H1 (cell line): ENCODE measurements at regions of chr7 and their contacts with region 1.

Region 1: GRCh38 chr7:129054438-129055293 is at the start of gene TNPO3:
- DNase-seq: peak; percentile 83 to 95
- H3K4me3 ChIP-seq: peak within 1 kb of the TSS; percentile 83 to 99 (median 92)
- H3K27ac ChIP-seq: peak within 1 kb of the TSS; percentile 96
- H3K4me1 ChIP-seq: no peaks in the 10 kb centered on the region; a peak in 1 of 7 replicates
- H3K27me3 ChIP-seq: no peaks in the 10 kb centered on the region
- CTCF ChIP-seq: 0 out of 4 replicates have a peak, but pooled peaks of 1 of the 3 experiments have one; percentile 12
- EP300 ChIP-seq: no peak
- POLR2A ChIP-seq: peak; percentile 75 to 99
- RAD21 ChIP-seq: no peak
- total RNA-seq, gene TNPO3: 99.2 and 100 TPM in 2 replicates

Region 2: DNA sequence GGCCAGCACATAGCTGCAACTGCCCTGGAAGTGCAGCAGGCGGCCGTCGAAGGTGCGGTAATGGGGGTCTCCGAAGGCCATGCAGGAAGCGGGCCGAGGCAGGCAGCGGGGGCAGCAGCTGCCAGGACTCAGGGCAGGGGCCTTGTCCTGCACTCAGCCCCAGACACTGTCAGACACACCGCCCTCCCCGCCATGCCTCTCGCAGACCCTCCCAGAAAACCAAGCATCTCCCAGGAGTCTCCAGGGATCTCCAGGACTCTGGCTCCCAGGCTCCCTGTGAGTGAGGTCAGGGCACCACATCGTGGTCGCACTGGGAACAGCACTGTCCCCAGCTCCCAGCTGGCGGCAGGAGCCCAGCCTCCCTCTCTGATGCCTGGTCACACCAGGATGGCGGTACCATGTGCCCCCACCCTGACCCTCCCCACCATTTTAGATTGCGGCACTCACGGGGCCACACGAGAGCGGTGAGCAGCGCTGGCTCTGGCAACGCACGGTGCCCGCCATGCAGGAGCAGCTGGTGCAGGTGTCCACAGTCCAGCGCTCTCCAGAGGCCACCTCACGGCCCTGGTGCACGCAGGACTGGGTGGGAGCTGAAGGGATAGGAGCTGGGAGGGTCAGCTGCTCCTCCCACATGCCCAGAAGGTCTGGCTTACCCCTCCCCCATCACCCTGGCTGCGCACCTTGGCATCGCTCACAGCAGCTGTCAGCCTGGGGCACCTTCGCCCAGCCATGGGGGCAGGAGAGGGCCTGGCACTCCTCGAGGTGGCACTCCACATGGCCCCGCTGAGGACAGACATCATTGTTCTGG is 174.5 kb before region 1 on chr7:
- CTCF ChIA-PET with region 1: no interaction called
- POLR2A ChIA-PET with region 1: no interaction called
- DNase-seq: peak in 1 of 2 experiments; percentile 89
- H3K4me3 ChIP-seq: no peak overlapping the region
- H3K27ac ChIP-seq: no peak overlapping the region
- H3K4me1 ChIP-seq: peaks cover 0 to 6% (median 4%) of the 10 kb centered on the region in 4 experiments; a peak in 4 of 7 replicates
- H3K27me3 ChIP-seq: no peaks in the 10 kb centered on the region; a peak in 1 of 7 replicates
- CTCF ChIP-seq: peak in 2 of 3 experiments; percentile 96 to 97; a peak in 3 of 4 replicates
- EP300 ChIP-seq: no peak
- POLR2A ChIP-seq: no peak
- RAD21 ChIP-seq: peak; percentile 99

Region 3: DNA sequence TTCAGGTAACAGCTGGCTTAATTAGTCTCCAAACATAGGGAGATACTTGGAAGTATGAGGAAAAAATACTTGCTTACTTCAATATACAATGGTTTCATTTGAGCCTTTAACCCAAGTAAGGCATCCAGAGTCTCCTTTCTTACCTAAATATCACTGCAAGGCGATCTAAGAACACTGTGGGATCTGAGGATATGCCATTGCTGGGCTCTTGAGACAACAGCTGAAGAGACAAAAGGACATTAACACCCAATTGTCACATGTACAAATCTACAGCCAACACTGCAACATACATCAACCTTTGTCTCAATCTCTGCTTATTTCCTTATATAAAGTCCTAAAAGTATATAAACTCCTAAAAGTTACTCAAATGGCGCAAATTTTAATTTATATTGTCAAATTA is 72.6 kb before region 1 on chr7:
- CTCF ChIA-PET with region 1: no interaction called
- POLR2A ChIA-PET with region 1: no interaction called
- DNase-seq: no peak
- H3K4me3 ChIP-seq: no peak overlapping the region
- H3K27ac ChIP-seq: no peak overlapping the region
- H3K4me1 ChIP-seq: peaks cover 0 to 3% (median 1%) of the 10 kb centered on the region in 4 experiments; a peak in 2 of 7 replicates
- H3K27me3 ChIP-seq: no peaks in the 10 kb centered on the region
- CTCF ChIP-seq: no peak
- EP300 ChIP-seq: no peak
- POLR2A ChIP-seq: no peak
- RAD21 ChIP-seq: no peak

Region 4: GRCh38 chr7:129041142-129042085 is 13.3 kb before region 1 on chr7:
- CTCF ChIA-PET with region 1: interaction called, 8 read pairs
- POLR2A ChIA-PET with region 1: interaction called, 41 read pairs
- DNase-seq: no peak
- H3K4me3 ChIP-seq: 0 out of 8 replicates have a peak overlapping the region, but pooled peaks of 1 of the 4 experiments have one; percentile 21
- H3K27ac ChIP-seq: no peak overlapping the region
- H3K4me1 ChIP-seq: peaks cover 3 to 16% (median 6%) of the 10 kb centered on the region in 4 experiments; a peak in 6 of 7 replicates
- H3K27me3 ChIP-seq: no peaks in the 10 kb centered on the region
- CTCF ChIP-seq: no peak
- EP300 ChIP-seq: no peak
- POLR2A ChIP-seq: no peak
- RAD21 ChIP-seq: no peak

Region 5: DNA sequence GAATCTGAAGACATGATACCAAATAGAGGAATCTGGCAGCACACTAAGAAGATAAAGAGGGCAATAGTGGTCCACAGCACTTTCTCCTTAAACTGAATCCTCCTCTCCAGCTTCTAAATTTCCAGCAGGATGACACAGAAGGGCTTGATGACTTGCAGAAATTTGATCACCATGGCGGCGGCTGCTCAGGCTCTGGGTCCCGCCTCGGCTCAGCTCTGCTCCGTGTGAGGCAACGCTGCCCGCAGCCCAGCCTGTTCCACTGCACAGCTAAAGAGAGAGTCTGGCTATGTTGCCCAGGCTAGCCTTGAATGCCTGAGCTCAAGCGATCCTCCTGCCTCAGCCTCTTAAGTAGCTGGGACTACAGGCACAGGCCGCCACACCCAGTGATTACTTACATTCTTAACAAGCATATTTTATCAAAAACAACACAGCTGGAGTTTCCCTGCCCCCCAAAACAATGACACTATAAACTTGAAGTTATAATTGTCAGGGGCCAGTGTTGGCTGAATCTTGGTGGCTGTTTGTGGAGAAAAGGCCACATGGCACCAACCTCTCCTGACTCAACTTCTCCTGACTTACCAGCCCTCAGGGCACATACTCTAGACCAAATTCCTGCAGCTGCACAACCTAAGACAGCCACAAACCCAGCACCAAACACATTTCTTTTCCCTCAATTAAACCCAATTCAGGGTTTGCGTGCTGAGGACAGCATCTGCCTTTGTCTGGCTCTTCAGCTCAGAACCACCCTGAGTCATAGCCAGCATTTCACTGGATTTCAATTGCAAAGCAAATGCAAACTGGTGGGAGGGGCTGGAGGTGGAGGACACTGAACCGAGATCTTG is 11.8 kb after region 1 on chr7:
- CTCF ChIA-PET with region 1: interaction called, 11 read pairs
- POLR2A ChIA-PET with region 1: interaction called, 94 read pairs
- DNase-seq: no peak
- H3K4me3 ChIP-seq: no peak overlapping the region
- H3K27ac ChIP-seq: no peak overlapping the region; the same call in 1 of the 2 replicates
- H3K4me1 ChIP-seq: peaks cover 0 to 10% (median 5%) of the 10 kb centered on the region in 4 experiments; a peak in 4 of 7 replicates
- H3K27me3 ChIP-seq: no peaks in the 10 kb centered on the region
- CTCF ChIP-seq: no peak
- EP300 ChIP-seq: no peak
- POLR2A ChIP-seq: peak in 1 of 2 experiments; percentile 61; a peak in 1 of 3 replicates
- RAD21 ChIP-seq: no peak

Region 6: GRCh38 chr7:129110258-129110981 is 55.8 kb after region 1 on chr7:
- CTCF ChIA-PET with region 1: no interaction called
- POLR2A ChIA-PET with region 1: interaction called, 11 read pairs
- DNase-seq: peak in 1 of 2 experiments; percentile 61
- H3K4me3 ChIP-seq: 0 out of 8 replicates have a peak overlapping the region, but pooled peaks of 1 of the 4 experiments have one; percentile 3
- H3K27ac ChIP-seq: peak overlapping the region; percentile 50; the same call in 1 of the 2 replicates
- H3K4me1 ChIP-seq: peaks cover 4 to 11% (median 5%) of the 10 kb centered on the region in 4 experiments; a peak in 6 of 7 replicates
- H3K27me3 ChIP-seq: no peaks in the 10 kb centered on the region
- CTCF ChIP-seq: no peak
- EP300 ChIP-seq: no peak
- POLR2A ChIP-seq: peak in 1 of 2 experiments; percentile 16; a peak in 1 of 3 replicates
- RAD21 ChIP-seq: no peak